ENCODE measurements at regions of chr21 and their contacts with region 1.

Region 1: GRCh38 chr21:16342932-16343331 is 613.1 kb downstream of the USP25 start:
- DNase-seq: no peak
- ATAC-seq: no peak

Region 2: DNA sequence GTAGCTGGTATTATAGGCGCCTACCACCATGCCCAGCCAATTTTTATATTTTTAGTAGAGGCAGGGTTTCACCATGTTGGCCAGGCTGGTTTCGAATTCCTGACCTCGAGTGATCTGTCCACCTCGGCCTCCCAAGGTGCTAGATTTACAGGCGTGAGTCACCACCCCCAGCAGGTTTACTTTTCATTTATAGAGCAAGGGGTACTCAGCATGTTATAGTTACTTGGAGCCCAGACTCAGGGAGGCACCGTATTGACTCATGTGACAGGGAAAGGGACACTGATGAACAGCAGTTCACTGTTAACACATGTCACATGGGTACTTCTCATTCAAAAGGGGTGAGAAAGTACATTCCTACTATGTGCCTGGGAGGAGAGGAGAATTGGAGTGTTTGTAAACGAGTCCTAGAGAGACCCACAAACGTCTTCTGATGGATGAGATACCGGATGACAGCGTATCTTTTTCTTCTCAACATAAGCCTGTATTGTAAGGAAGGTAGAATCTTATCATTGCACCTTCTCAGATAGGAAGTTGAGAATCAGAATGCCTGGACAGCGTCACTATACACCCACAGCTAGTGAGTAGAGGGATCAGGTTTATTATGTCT is 103.2 kb before region 1 on chr21:
- intact Hi-C with region 1: no loop called
- DNase-seq: no peak
- ATAC-seq: no peak

Region 3: GRCh38 chr21:16842696-16843035 is 499.7 kb after region 1 on chr21:
- intact Hi-C with region 1: loop called (anchors 10 kb)
- DNase-seq: no peak
- ATAC-seq: no peak

Measured in left ventricle myocardium superior (tissue), 1 donor.